GM12878 (cell line): ENCODE measurements at regions of chr13 and their contacts with region 1.

Region 1: GRCh38 chr13:77329133-77329910 is 2.4 kb upstream of the MYCBP2 start:
- DNase-seq: peak; percentile 98
- ATAC-seq: peak; percentile 76
- H3K4me3 ChIP-seq: peak overlapping the region; percentile 76
- H3K27ac ChIP-seq: peak overlapping the region; percentile 98
- H3K4me1 ChIP-seq: peaks cover 16% of the 10 kb centered on the region; the same call in 1 of the 2 replicates
- H3K27me3 ChIP-seq: no peaks in the 10 kb centered on the region
- CTCF ChIP-seq: 0 out of 6 replicates have a peak, but pooled peaks of 2 of the 3 experiments have one; percentile 2
- EP300 ChIP-seq: peak; percentile 43 to 86; a peak in 3 of 4 replicates
- POLR2A ChIP-seq: peak; percentile 86
- RAD21 ChIP-seq: peak; percentile 25; the same call in 1 of the 2 replicates

Region 2: DNA sequence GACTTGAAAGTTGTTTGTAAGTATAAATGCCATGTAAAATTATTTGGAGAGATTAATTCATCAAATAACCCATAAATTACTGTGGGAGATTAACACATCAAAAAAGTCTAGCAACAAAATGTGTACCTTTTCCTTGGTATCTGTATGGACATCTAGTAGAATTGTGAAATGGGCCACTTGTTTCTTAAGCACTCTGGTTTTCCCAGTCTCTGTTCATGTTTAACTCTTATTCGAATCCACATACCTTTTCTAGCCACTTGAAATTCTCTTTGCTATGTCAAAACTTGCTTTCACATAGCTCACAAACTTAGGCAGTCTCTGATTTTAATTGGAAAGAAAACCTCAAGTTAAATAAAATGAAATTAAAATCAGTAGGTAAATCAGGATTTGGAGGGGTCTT is 1222.6 kb before region 1 on chr13:
- CTCF ChIA-PET with region 1: no interaction called
- POLR2A ChIA-PET with region 1: no interaction called
- RAD21 ChIA-PET with region 1: no interaction called
- SMC1A ChIA-PET with region 1: no interaction called
- in situ Hi-C with region 1: no loop called
- intact Hi-C with region 1: no loop called
- DNase-seq: no peak
- ATAC-seq: no peak
- H3K4me3 ChIP-seq: no peak overlapping the region
- H3K27ac ChIP-seq: no peak overlapping the region
- H3K4me1 ChIP-seq: no peaks in the 10 kb centered on the region
- H3K27me3 ChIP-seq: no peaks in the 10 kb centered on the region
- CTCF ChIP-seq: no peak
- EP300 ChIP-seq: no peak
- POLR2A ChIP-seq: no peak
- RAD21 ChIP-seq: no peak

Region 3: GRCh38 chr13:77113496-77113895 is 215.8 kb before region 1 on chr13:
- CTCF ChIA-PET with region 1: no interaction called
- POLR2A ChIA-PET with region 1: no interaction called
- RAD21 ChIA-PET with region 1: no interaction called
- SMC1A ChIA-PET with region 1: no interaction called
- in situ Hi-C with region 1: no loop called
- intact Hi-C with region 1: no loop called
- DNase-seq: no peak
- ATAC-seq: no peak
- H3K4me3 ChIP-seq: no peak overlapping the region
- H3K27ac ChIP-seq: no peak overlapping the region
- H3K4me1 ChIP-seq: no peaks in the 10 kb centered on the region
- H3K27me3 ChIP-seq: no peaks in the 10 kb centered on the region
- CTCF ChIP-seq: no peak
- EP300 ChIP-seq: no peak
- POLR2A ChIP-seq: no peak
- RAD21 ChIP-seq: no peak

Region 4: GRCh38 chr13:77300176-77301037 is 28.9 kb before region 1 on chr13:
- CTCF ChIA-PET with region 1: interaction called, 5 read pairs
- POLR2A ChIA-PET with region 1: interaction called, 3 read pairs
- RAD21 ChIA-PET with region 1: interaction called, 22 read pairs
- SMC1A ChIA-PET with region 1: interaction called, 67 read pairs
- in situ Hi-C with region 1: no loop called
- intact Hi-C with region 1: no loop called
- DNase-seq: no peak
- ATAC-seq: peak; percentile 52
- H3K4me3 ChIP-seq: peak overlapping the region; percentile 30; the same call in 1 of the 2 replicates
- H3K27ac ChIP-seq: peak overlapping the region; percentile 80
- H3K4me1 ChIP-seq: peaks cover 28% of the 10 kb centered on the region
- H3K27me3 ChIP-seq: no peaks in the 10 kb centered on the region
- CTCF ChIP-seq: no peak
- EP300 ChIP-seq: no peak
- POLR2A ChIP-seq: no peak
- RAD21 ChIP-seq: no peak

Region 5: DNA sequence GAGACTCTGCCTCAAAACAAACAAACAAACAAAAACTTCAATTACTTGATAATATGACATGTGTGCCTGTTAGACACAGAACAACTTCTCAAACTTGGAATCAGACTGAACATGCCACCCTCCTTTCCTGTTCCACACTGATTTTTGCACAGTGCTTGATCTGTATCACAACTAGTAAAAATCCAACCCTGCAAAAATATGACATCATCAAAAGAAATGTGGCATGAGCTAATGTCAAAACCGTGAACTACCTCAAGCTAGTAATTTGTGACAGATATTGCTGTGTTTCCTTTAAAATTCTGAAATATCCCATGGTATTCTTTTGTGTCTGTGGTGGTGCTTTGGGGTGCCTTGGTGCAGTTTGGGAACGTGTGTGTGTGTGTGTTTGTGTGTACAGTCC is 10.6 kb before region 1 on chr13:
- CTCF ChIA-PET with region 1: interaction called, 6 read pairs
- POLR2A ChIA-PET with region 1: interaction called, 7 read pairs
- RAD21 ChIA-PET with region 1: interaction called, 14 read pairs
- SMC1A ChIA-PET with region 1: interaction called, 10 read pairs
- in situ Hi-C with region 1: no loop called
- intact Hi-C with region 1: no loop called
- DNase-seq: no peak
- ATAC-seq: no peak; the same call in 2 of the 3 replicates
- H3K4me3 ChIP-seq: no peak overlapping the region
- H3K27ac ChIP-seq: no peak overlapping the region
- H3K4me1 ChIP-seq: 0 out of 2 replicates have a peak, but pooled peaks cover 3% of the 10 kb centered on the region
- H3K27me3 ChIP-seq: no peaks in the 10 kb centered on the region
- CTCF ChIP-seq: no peak
- EP300 ChIP-seq: no peak
- POLR2A ChIP-seq: no peak
- RAD21 ChIP-seq: no peak

Region 6: GRCh38 chr13:77351315-77351714 is 22.0 kb after region 1 on chr13:
- CTCF ChIA-PET with region 1: no interaction called
- POLR2A ChIA-PET with region 1: interaction called, 5 read pairs
- RAD21 ChIA-PET with region 1: interaction called, 14 read pairs
- SMC1A ChIA-PET with region 1: interaction called, 14 read pairs
- in situ Hi-C with region 1: no loop called
- intact Hi-C with region 1: no loop called
- DNase-seq: no peak
- ATAC-seq: no peak
- H3K4me3 ChIP-seq: no peak overlapping the region
- H3K27ac ChIP-seq: no peak overlapping the region
- H3K4me1 ChIP-seq: no peaks in the 10 kb centered on the region
- H3K27me3 ChIP-seq: no peaks in the 10 kb centered on the region
- CTCF ChIP-seq: no peak
- EP300 ChIP-seq: no peak
- POLR2A ChIP-seq: no peak
- RAD21 ChIP-seq: no peak

Region 7: DNA sequence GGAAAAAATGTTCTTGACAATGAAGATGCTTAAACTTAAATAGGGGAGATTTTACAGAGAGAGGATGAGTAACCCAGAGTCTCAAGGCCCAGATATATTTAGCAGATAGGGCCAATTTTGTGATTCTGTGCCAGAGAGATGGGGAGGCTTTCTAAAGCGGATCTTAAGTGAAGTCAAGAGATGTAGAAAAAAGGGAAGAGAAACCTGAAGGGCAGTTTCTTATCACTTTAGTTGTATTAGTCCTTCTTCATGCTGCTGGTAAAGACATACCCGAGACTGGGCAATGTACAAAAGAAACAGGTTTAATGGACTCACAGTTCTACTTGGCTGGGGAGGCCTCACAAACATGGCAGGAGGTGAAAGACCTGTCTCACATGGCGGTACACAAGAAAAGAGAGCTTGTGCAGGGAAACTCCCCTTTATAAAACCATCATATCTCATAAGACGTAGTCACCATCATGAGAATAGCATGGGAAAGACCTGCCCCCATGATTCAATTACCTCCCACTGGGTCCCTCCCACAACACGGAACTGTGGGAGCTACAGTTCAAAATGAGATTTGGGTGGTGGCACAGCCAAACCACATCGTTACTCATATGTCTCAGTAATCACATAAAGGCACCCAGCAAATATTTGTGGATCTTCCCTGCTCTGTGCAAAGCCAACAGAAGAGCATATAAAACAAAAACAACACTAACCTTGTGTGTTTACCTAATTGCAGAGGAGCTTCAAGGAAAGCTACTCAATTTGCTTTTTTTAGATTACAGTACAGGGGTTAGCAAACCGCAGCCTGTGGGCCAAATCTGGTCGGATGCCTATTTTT is 100.2 kb after region 1 on chr13:
- CTCF ChIA-PET with region 1: interaction called, 40 read pairs
- POLR2A ChIA-PET with region 1: interaction called, 21 read pairs
- RAD21 ChIA-PET with region 1: interaction called, 51 read pairs
- SMC1A ChIA-PET with region 1: interaction called, 50 read pairs
- in situ Hi-C with region 1: no loop called
- intact Hi-C with region 1: loop called (anchors 1 kb)
- DNase-seq: peak; percentile 93
- ATAC-seq: peak; percentile 63
- H3K4me3 ChIP-seq: peak overlapping the region; percentile 47
- H3K27ac ChIP-seq: peak overlapping the region; percentile 85
- H3K4me1 ChIP-seq: peaks cover 26% of the 10 kb centered on the region
- H3K27me3 ChIP-seq: no peaks in the 10 kb centered on the region
- CTCF ChIP-seq: no peak
- EP300 ChIP-seq: peak; percentile 64 to 73; a peak in 3 of 4 replicates
- POLR2A ChIP-seq: no peak
- RAD21 ChIP-seq: peak; percentile 21; the same call in 1 of the 2 replicates

Region 8: DNA sequence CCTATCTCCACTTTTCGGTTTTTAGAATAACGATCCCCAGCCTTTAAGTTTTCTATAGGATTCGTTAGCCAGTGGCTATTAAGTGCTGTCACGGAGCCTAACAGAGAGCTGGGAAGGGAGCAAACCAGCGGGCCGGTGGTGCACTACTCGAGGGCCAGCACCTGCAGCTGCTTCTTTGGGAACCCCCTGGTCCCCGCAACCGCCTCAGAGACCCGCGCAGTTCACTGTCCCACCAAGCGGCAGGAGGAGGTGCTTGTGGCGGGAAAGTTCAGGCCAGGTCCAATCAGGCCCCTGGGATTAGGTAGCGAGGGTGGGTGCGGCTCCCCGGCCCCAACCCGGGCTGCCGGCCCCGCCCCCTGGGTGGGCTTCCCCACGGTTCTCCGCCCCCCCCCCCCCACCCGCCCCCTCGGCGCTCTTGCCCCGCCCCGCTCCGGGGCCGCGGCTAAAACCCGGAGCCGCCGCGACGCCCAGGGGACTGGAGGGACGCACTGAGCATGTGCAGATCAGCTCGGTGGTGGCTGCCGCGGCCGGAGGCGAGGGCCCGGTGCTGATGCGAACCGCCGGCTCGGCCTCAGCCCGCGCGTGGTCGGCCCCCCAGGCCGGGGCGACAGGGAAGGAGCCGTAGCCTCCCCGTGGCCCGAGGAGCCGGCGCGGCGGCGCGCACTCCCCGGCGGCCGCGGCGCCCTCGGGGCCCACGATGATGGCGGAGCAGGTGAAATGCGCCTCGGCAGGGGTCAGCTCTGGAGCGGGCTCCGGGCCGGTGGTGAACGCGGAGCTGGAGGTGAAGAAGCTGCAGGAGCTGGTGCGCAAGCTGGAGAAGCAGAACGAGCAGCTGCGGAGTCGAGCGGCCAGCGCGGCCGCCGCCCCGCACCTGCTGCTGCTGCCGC is 368.1 kb after region 1 on chr13 and contains the start of gene SLAIN1:
- CTCF ChIA-PET with region 1: no interaction called
- POLR2A ChIA-PET with region 1: interaction called, 3 read pairs
- RAD21 ChIA-PET with region 1: interaction called, 3 read pairs
- SMC1A ChIA-PET with region 1: no interaction called
- in situ Hi-C with region 1: no loop called
- intact Hi-C with region 1: loop called (anchors 1 kb)
- DNase-seq: no peak
- ATAC-seq: peak; percentile 84
- H3K4me3 ChIP-seq: peak within 1 kb of the TSS; percentile 87
- H3K27ac ChIP-seq: peak within 1 kb of the TSS; percentile 38
- H3K4me1 ChIP-seq: peaks cover 13% of the 10 kb centered on the region; the same call in 1 of the 2 replicates
- H3K27me3 ChIP-seq: no peaks in the 10 kb centered on the region; a peak in 1 of 4 replicates
- CTCF ChIP-seq: no peak
- EP300 ChIP-seq: no peak
- POLR2A ChIP-seq: peak; percentile 87
- RAD21 ChIP-seq: no peak
- polyA plus RNA-seq, gene SLAIN1: 26.8 to 35.1 TPM